ENCODE measurements at regions of chr2 and their contacts with region 1.

Region 1: DNA sequence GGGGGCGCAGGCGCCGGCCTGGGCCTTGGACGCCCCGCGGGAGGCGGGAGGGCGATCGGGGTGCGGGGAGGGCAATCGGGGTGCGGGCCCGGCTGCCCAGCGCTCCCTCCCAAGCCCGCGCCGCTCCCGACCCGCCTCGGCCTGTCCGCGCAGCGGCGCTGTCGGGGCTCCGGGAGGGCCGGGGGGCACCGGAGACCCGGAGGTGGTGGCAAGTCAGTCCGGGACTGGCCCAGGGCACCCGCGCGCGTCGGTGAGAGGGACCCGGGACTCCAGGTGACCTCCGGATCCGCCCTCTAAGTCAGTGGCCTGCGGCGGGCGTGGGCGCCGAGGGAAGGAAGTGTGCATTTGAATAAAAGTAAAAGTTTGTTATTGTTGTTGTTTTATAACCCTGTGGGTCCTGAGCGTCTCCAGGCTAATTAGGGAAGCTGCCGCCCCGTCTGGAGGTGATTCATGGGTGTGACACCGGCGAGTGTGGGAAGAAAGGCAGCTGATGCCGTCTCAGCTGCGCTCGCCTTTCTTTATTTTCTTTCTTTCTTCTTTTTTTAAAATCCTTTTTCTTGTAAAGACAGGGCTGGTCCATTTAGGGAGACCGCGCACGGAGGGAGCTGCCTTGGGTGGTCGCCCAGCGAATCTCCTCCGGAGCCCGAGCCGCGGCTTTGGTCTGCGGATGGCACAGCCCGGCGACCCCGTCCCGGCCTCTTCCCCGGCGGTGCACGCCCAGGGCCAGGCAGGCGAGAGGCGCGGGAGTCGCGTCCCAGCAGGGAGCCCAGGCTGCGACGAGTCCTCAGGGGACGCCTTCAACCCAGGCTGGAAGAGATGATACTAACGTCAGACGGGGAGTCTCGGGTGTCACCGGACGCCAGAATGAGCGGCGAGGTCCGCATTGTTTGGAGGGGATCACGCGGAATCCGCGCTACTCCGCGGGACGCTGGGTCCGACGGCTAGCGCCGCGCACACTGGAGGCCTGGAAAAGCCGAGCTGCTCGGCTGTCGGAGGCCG is 627 bp upstream of the CRACDL start:
- DNase-seq: peak; percentile 59
- ATAC-seq: peak; percentile 71
- H3K4me3 Mint-ChIP-seq: peak overlapping the region; percentile 69
- H3K27ac Mint-ChIP-seq: no peak overlapping the region
- H3K4me1 Mint-ChIP-seq: peaks cover 7% of the 10 kb centered on the region; the same call in 1 of the 2 replicates
- H3K27me3 Mint-ChIP-seq: peaks cover 61% of the 10 kb centered on the region
- CTCF ChIP-seq: no peak

Region 2: GRCh38 chr2:99066075-99066958 is 129.7 kb after region 1 on chr2:
- CTCF ChIA-PET with region 1: interaction called, 24 read pairs
- POLR2A ChIA-PET with region 1: no interaction called
- DNase-seq: no peak
- ATAC-seq: peak; percentile 86
- H3K4me3 Mint-ChIP-seq: no peak overlapping the region
- H3K27ac Mint-ChIP-seq: no peak overlapping the region
- H3K4me1 Mint-ChIP-seq: no peaks in the 10 kb centered on the region
- H3K27me3 Mint-ChIP-seq: no peaks in the 10 kb centered on the region
- CTCF ChIP-seq: peak; percentile 31